Right ventricle myocardium inferior (tissue), 1 donor: ENCODE measurements at regions of chr11 and their contacts with region 1.

Region 1: DNA sequence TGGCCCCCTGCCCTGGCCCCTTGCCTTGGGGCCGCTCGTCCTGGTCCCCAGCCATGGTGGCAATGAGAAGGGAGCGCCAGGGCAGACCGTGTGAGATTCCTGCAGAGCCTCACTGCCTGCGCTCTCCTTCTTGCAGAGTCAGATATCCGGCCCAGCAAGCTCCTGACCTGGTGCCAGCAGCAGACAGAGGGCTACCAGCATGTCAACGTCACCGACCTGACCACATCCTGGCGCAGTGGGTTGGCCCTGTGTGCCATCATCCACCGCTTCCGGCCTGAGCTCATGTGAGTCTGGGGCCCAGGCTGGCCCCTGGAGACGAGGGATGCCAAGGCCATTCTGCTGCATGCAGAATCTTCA is 114.1 kb downstream of the MICAL2 start:
- DNase-seq: peak; percentile 92
- ATAC-seq: peak; percentile 11

Region 2: GRCh38 chr11:12182676-12183541 is 41.6 kb before region 1 on chr11:
- intact Hi-C with region 1: loop called (anchors 5 kb)
- DNase-seq: no peak
- ATAC-seq: peak; percentile 67

Region 3: GRCh38 chr11:12200279-12201010 is 24.1 kb before region 1 on chr11:
- intact Hi-C with region 1: loop called (anchors 2 kb)
- DNase-seq: no peak
- ATAC-seq: peak; percentile 6